H1 (cell line): ENCODE measurements at regions of chr15 and their contacts with region 1.

Region 1: GRCh38 chr15:100733101-100733788 is 130.9 kb downstream of the ASB7 start:
- DNase-seq: peak in 1 of 2 experiments; percentile 19
- H3K4me3 ChIP-seq: no peak overlapping the region
- H3K27ac ChIP-seq: no peak overlapping the region
- H3K4me1 ChIP-seq: no peaks in the 10 kb centered on the region; a peak in 1 of 7 replicates
- H3K27me3 ChIP-seq: no peaks in the 10 kb centered on the region
- CTCF ChIP-seq: no peak
- EP300 ChIP-seq: no peak
- POLR2A ChIP-seq: no peak
- RAD21 ChIP-seq: no peak

Region 2: GRCh38 chr15:100612539-100612938 is 120.7 kb before region 1 on chr15:
- CTCF ChIA-PET with region 1: no interaction called
- POLR2A ChIA-PET with region 1: no interaction called
- DNase-seq: no peak
- H3K4me3 ChIP-seq: no peak overlapping the region
- H3K27ac ChIP-seq: no peak overlapping the region
- H3K4me1 ChIP-seq: no peaks in the 10 kb centered on the region
- H3K27me3 ChIP-seq: no peaks in the 10 kb centered on the region
- CTCF ChIP-seq: no peak
- EP300 ChIP-seq: no peak
- POLR2A ChIP-seq: no peak
- RAD21 ChIP-seq: no peak

Region 3: DNA sequence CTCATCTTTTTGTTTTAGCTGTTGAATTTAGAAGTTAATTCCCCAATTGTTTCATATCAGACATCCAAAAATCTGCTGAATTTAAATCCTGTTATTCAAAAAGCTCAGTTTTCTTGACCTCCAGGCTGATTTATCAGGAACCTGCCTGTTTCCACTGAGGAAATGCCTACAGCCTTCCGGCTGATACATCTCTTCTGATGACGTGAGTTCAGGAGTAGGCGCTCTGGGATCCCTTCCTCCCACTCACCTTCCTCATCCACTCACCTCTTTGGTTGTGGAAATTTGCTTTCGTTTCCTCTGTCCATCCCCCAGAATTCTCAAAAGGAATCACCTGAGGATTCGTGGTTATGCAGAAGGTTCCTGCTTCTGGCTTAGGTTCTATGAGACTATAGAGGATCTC is 91.0 kb after region 1 on chr15:
- CTCF ChIA-PET with region 1: no interaction called
- POLR2A ChIA-PET with region 1: no interaction called
- DNase-seq: no peak
- H3K4me3 ChIP-seq: no peak overlapping the region
- H3K27ac ChIP-seq: no peak overlapping the region
- H3K4me1 ChIP-seq: no peaks in the 10 kb centered on the region
- H3K27me3 ChIP-seq: no peaks in the 10 kb centered on the region
- CTCF ChIP-seq: no peak
- EP300 ChIP-seq: no peak
- POLR2A ChIP-seq: no peak
- RAD21 ChIP-seq: no peak

Region 4: DNA sequence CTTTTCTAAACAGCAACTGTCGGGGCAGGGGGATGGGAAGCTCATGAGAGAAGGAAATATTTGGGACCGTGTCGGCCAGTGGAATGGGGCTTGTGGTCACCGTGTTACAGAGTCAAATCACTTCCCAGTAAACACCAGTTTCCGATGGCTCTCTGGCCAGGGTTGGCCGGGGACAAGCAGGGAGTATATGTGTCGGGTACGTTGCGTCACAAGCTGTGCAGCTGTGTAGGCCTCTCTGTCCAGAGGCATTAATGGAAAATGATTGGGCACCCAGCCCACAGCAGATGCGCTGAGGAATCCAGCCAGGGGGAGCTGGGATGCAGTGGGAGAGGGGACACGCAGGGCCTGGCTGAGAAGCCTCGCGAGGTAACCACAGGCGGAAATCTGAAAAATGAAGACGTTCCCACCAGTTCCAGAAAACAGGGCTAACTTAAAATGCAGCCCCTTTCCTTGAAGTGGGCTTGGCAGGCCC is 130.6 kb after region 1 on chr15:
- CTCF ChIA-PET with region 1: interaction called, 95 read pairs
- POLR2A ChIA-PET with region 1: no interaction called
- DNase-seq: no peak
- H3K4me3 ChIP-seq: no peak overlapping the region
- H3K27ac ChIP-seq: no peak overlapping the region
- H3K4me1 ChIP-seq: no peaks in the 10 kb centered on the region
- H3K27me3 ChIP-seq: no peaks in the 10 kb centered on the region
- CTCF ChIP-seq: no peak
- EP300 ChIP-seq: no peak
- POLR2A ChIP-seq: no peak
- RAD21 ChIP-seq: no peak